ENCODE measurements at regions of chr5 and their contacts with region 1.

Region 1: GRCh38 chr5:107389130-107389774 is 281.5 kb downstream of the EFNA5 start:
- DNase-seq: peak; percentile 87
- ATAC-seq: peak; percentile 86
- H3K4me3 ChIP-seq: peak overlapping the region; percentile 44; the same call in 1 of the 2 replicates
- H3K27ac ChIP-seq: peak overlapping the region; percentile 92
- H3K4me1 ChIP-seq: peaks cover 40% of the 10 kb centered on the region
- H3K27me3 ChIP-seq: no peaks in the 10 kb centered on the region
- CTCF ChIP-seq: peak; percentile 32; the same call in 1 of the 2 replicates

Region 2: DNA sequence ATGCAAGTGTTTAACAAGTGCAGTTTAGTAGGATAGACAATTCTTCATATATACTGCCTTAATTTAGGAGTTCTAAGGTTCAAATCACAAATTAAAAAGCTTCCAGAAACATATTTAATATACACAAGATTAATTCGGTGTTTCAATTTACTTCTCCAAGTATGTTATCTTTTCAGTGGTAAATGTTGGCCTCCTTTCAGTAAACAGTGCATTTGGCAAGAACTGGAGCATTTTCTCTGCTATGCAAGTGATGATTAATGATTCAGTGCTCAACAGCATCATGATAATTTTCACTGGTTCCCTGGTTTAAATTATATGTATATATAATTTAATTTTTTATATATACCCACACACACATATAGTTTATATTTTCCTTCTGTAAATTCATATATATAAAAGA is 260.2 kb before region 1 on chr5:
- CTCF ChIA-PET with region 1: no interaction called
- POLR2A ChIA-PET with region 1: no interaction called
- intact Hi-C with region 1: loop called (anchors 5 kb)
- DNase-seq: peak; percentile 4
- ATAC-seq: no peak
- H3K4me3 ChIP-seq: no peak overlapping the region
- H3K27ac ChIP-seq: no peak overlapping the region
- H3K4me1 ChIP-seq: peaks cover 18% of the 10 kb centered on the region
- H3K27me3 ChIP-seq: no peaks in the 10 kb centered on the region
- CTCF ChIP-seq: no peak

Region 3: GRCh38 chr5:107425541-107426256 is 36.4 kb after region 1 on chr5:
- CTCF ChIA-PET with region 1: interaction called, 7 read pairs
- POLR2A ChIA-PET with region 1: no interaction called
- intact Hi-C with region 1: loop called (anchors 2 kb)
- DNase-seq: peak; percentile 83
- ATAC-seq: peak; percentile 86
- H3K4me3 ChIP-seq: peak overlapping the region; percentile 38; the same call in 1 of the 2 replicates
- H3K27ac ChIP-seq: peak overlapping the region; percentile 89
- H3K4me1 ChIP-seq: peaks cover 40% of the 10 kb centered on the region
- H3K27me3 ChIP-seq: no peaks in the 10 kb centered on the region
- CTCF ChIP-seq: no peak

Region 4: DNA sequence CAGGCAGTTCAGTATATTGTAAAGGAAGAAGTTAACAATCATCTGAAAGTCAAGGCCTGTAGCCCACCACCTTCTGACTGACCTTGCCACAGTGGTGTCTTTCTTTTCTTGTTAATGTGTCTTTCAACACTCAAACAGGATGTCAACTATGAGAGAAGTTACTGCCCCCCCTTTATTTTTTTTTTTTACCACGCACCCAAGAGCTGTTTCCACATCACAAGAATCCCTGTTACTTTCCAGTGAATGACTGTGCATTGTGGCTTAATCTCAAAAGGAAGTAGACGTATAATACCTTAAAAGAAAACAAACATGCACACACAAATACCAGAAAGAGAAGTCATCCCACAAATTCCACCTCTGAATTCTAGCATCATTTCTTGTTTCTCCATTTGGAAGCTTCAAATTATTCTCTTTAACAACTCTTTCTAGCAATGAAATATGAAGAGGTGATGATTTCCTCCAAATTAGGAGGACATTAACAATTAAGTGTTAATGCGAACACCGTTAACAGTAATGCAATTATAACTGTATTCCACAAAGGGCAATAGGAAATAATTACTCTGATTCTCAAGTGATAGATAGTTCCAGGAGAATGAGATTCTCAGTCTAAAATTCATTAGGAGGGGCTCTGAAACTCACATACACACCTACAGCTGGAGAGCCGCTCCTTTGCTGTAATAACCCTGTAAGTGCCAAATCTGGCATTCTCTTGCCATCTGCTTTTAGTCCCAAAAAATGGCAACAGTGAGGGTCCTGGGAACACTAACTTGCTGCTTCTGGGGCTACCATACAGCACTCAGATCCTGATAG is 80.4 kb after region 1 on chr5:
- CTCF ChIA-PET with region 1: no interaction called
- POLR2A ChIA-PET with region 1: no interaction called
- intact Hi-C with region 1: loop called (anchors 1 kb)
- DNase-seq: peak; percentile 86
- ATAC-seq: peak; percentile 75
- H3K4me3 ChIP-seq: peak overlapping the region; percentile 20; the same call in 1 of the 2 replicates
- H3K27ac ChIP-seq: peak overlapping the region; percentile 85
- H3K4me1 ChIP-seq: peaks cover 87% of the 10 kb centered on the region
- H3K27me3 ChIP-seq: no peaks in the 10 kb centered on the region
- CTCF ChIP-seq: no peak

Region 5: DNA sequence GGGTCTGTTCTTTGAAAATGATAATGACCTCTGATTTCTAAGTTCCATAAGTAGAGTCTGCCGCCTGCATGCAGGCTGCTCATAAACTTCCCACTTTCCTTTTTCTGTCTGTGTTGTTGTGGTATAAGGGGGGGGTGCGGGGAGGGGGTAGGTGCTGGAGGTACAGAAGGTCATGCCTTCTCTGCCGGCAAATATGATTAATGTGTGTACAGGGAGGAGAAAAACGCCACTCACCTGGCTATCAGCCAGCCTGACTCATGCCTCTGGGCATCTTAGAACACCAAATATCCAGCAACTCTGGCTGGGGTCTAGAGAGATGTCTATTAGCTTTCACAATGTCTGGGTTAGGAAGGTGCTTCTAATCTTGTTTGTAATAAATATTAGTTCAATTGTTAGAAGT is 153.2 kb after region 1 on chr5:
- CTCF ChIA-PET with region 1: no interaction called
- POLR2A ChIA-PET with region 1: no interaction called
- intact Hi-C with region 1: loop called (anchors 1 kb)
- DNase-seq: peak; percentile 96
- ATAC-seq: peak; percentile 93
- H3K4me3 ChIP-seq: peak overlapping the region; percentile 47
- H3K27ac ChIP-seq: peak overlapping the region; percentile 75
- H3K4me1 ChIP-seq: peaks cover 18% of the 10 kb centered on the region
- H3K27me3 ChIP-seq: no peaks in the 10 kb centered on the region
- CTCF ChIP-seq: no peak

Region 6: DNA sequence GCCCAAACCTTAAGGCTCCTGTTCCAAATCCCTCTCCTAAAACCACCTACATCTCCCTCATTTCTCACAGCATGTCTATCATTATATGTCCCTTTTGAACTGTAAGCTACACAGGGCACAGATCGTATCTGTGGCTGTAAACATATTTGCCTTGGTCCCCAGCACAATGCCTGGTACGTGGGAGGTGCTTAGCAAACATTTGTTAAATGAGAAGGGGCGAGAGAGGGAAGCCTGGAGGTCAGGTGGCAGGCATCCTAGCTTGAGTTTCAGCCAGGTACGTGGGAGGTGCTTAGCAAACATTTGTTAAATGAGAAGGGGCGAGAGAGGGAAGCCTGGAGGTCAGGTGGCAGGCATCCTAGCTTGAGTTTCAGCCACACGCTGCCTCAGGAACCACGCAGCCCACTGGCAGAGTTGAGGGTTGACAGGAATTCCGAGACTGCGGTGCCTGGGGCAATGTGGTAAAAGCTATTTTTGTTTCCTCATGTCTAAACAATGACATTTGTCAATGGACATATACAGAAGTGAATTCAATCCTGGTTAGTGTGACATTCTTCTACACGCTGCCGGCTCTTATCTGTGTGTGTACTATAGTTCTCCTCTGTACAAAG is 167.9 kb after region 1 on chr5:
- CTCF ChIA-PET with region 1: no interaction called
- POLR2A ChIA-PET with region 1: no interaction called
- intact Hi-C with region 1: loop called (anchors 5 kb)
- DNase-seq: peak; percentile 86
- ATAC-seq: peak; percentile 80
- H3K4me3 ChIP-seq: peak overlapping the region; percentile 4; the same call in 1 of the 2 replicates
- H3K27ac ChIP-seq: peak overlapping the region; percentile 53
- H3K4me1 ChIP-seq: peaks cover 36% of the 10 kb centered on the region
- H3K27me3 ChIP-seq: no peaks in the 10 kb centered on the region
- CTCF ChIP-seq: no peak

Region 7: GRCh38 chr5:107705402-107706014 is 316.3 kb after region 1 on chr5:
- CTCF ChIA-PET with region 1: no interaction called
- POLR2A ChIA-PET with region 1: no interaction called
- intact Hi-C with region 1: no loop called
- DNase-seq: peak; percentile 78
- ATAC-seq: peak; percentile 75
- H3K4me3 ChIP-seq: no peak overlapping the region
- H3K27ac ChIP-seq: no peak overlapping the region
- H3K4me1 ChIP-seq: peaks cover 12% of the 10 kb centered on the region
- H3K27me3 ChIP-seq: no peaks in the 10 kb centered on the region
- CTCF ChIP-seq: no peak

Region 8: GRCh38 chr5:107919969-107920368 is 530.7 kb after region 1 on chr5:
- CTCF ChIA-PET with region 1: no interaction called
- POLR2A ChIA-PET with region 1: no interaction called
- intact Hi-C with region 1: no loop called
- DNase-seq: no peak
- ATAC-seq: no peak
- H3K4me3 ChIP-seq: no peak overlapping the region
- H3K27ac ChIP-seq: no peak overlapping the region
- H3K4me1 ChIP-seq: no peaks in the 10 kb centered on the region
- H3K27me3 ChIP-seq: no peaks in the 10 kb centered on the region
- CTCF ChIP-seq: no peak

Measured in PC-3 (cell line).